Activated CD4-positive, alpha-beta T cell treated with anti-CD3 and anti-CD28 coated beads, Interleukin-2, amount 10 ng/mL, durations not matched to agents 24 days and 14 days (primary cell): ENCODE measurements at regions of chr3 and their contacts with region 1.

Region 1: DNA sequence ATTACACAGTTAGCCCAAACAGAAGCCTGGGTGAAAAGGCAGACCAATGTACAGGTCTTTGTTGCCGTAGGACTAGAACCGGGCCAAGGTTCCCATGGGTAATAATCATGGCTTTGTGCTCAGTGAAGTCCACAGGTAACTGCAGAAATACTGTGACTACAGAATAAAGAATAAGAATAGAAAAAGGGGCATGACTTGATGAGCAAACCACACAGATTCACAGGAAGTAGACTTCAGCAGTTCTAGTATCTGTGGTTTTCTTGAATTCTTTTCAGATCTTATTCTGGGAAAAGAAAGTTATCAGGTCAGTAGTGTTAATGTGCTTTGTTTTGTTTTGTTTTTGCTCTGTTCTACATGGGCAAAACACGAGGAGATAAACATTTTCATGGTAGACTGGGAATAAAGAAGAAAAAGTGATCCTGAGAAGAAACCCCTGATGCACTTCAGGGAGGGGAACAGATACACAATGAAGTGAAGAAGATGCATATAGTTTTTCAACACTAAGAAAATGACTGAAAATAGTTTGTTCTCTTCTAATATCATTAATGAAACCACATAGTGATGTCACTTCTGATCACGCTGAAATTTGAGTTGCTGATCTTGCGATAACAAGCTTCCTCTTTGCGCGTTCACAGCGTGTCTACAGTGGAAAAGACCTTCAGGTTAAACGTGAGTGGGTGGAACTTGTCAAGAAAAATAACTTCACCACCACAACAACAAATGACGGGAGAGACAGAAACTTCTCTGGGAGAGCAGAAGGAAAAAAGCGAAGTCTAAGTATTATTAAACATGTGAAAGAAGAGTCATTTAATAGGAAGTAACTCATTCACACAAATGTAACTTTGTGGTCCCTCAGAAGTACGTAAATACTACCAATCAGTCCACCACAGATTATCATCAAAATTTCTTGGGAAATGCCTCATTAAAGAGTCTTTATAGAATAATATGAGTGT is 315.8 kb upstream of the SATB1 start:
- DNase-seq: peak; percentile 90
- H3K4me3 Mint-ChIP-seq: peak overlapping the region; percentile 63
- H3K27ac Mint-ChIP-seq: peak overlapping the region; percentile 91
- H3K4me1 Mint-ChIP-seq: peaks cover 78% of the 10 kb centered on the region
- H3K27me3 Mint-ChIP-seq: no peaks in the 10 kb centered on the region

Region 2: GRCh38 chr3:18424729-18425640 is 315.9 kb before region 1 on chr3 and contains the start of gene SATB1:
- intact Hi-C with region 1: loop called (anchors 1 kb)
- DNase-seq: peak; percentile 91
- H3K4me3 Mint-ChIP-seq: peak within 1 kb of the TSS; percentile 83
- H3K27ac Mint-ChIP-seq: peak within 1 kb of the TSS; percentile 98
- H3K4me1 Mint-ChIP-seq: peaks cover 55% of the 10 kb centered on the region
- H3K27me3 Mint-ChIP-seq: peaks cover 2% of the 10 kb centered on the region
- total RNA-seq, gene SATB1: 561 and 571 TPM in 2 replicates

Region 3: GRCh38 chr3:18649666-18650363 is 91.1 kb before region 1 on chr3:
- intact Hi-C with region 1: loop called (anchors 1 kb)
- DNase-seq: peak; percentile 89
- H3K4me3 Mint-ChIP-seq: peak overlapping the region; percentile 61
- H3K27ac Mint-ChIP-seq: peak overlapping the region; percentile 93
- H3K4me1 Mint-ChIP-seq: peaks cover 73% of the 10 kb centered on the region
- H3K27me3 Mint-ChIP-seq: no peaks in the 10 kb centered on the region

Region 4: GRCh38 chr3:18725668-18726407 is 15.1 kb before region 1 on chr3:
- intact Hi-C with region 1: loop called (anchors 1 kb)
- DNase-seq: peak; percentile 83
- H3K4me3 Mint-ChIP-seq: peak overlapping the region; percentile 71
- H3K27ac Mint-ChIP-seq: peak overlapping the region; percentile 96
- H3K4me1 Mint-ChIP-seq: peaks cover 58% of the 10 kb centered on the region
- H3K27me3 Mint-ChIP-seq: no peaks in the 10 kb centered on the region

Region 5: DNA sequence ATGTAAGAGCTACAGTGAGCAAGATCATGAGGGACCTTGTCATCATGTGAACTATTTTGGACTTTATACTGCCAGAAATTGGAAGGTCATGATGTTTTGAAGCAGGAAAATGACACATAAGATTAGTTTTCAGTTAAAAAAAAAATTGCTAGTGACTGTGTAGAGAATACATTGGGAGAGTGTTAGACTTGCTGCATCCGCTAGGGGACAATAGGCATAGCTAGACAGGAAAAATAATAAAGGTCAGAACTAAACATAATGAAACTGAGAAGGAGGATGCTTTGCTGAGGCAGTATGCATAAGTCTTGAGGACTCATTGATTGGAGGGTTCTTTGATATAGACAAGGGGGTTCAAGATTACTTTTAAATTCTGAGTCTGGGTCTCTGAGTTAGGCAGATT is 131.6 kb after region 1 on chr3:
- intact Hi-C with region 1: loop called (anchors 5 kb)
- DNase-seq: no peak
- H3K4me3 Mint-ChIP-seq: no peak overlapping the region
- H3K27ac Mint-ChIP-seq: no peak overlapping the region
- H3K4me1 Mint-ChIP-seq: peaks cover 32% of the 10 kb centered on the region
- H3K27me3 Mint-ChIP-seq: no peaks in the 10 kb centered on the region